ENCODE measurements at regions of chr17 and their contacts with region 1.

Region 1: DNA sequence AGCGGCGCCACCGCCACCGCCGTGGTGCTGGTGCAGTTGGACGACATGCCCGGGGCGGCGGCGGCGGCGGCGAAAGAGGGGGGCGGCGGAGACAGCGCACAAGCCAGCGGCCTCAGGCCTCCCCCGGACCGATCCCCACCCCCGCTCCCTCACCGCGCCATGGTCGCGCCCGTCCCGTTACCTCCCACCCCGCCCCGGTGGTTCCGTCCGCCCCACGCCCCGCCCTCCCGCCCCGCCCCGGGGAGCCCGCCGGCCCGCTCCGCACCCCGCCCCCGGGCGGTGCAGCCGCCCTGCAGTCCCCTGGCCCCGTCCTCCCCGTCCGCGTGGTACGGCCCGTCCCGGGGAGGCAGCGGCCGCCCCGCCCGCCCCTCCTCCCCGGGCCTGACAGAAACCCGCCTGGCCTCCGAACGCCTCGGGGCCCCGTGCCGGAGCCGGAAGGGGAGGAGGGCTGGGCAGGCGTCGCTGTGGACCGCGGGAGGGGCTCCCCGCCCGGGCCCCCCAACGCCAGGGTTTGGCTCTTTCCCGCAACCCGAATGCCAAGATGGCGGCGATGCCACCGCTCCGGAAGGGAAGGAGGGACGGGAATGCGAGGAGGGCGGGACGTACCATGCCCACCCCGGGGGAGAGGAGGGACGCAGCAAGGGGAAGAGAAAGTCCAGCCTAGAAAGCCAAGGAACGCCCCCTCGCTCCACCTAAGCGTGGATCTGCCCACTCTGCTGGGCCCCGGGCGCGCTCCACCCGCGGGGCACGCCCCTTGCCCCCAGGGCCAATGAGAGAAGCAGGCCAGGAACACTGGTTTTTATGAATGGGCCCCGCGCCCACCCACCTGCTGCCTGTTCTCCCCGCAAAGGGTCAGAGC is at the start of gene PIP4K2B:
- DNase-seq: peak; percentile 93
- ATAC-seq: peak; percentile 83
- H3K4me3 Mint-ChIP-seq: peak within 1 kb of the TSS; percentile 99
- H3K27ac Mint-ChIP-seq: peak within 1 kb of the TSS; percentile 94
- H3K4me1 Mint-ChIP-seq: peaks cover 33% of the 10 kb centered on the region
- H3K27me3 Mint-ChIP-seq: no peaks in the 10 kb centered on the region
- total RNA-seq, gene PIP4K2B: 36.3 to 41.6 TPM

Region 2: DNA sequence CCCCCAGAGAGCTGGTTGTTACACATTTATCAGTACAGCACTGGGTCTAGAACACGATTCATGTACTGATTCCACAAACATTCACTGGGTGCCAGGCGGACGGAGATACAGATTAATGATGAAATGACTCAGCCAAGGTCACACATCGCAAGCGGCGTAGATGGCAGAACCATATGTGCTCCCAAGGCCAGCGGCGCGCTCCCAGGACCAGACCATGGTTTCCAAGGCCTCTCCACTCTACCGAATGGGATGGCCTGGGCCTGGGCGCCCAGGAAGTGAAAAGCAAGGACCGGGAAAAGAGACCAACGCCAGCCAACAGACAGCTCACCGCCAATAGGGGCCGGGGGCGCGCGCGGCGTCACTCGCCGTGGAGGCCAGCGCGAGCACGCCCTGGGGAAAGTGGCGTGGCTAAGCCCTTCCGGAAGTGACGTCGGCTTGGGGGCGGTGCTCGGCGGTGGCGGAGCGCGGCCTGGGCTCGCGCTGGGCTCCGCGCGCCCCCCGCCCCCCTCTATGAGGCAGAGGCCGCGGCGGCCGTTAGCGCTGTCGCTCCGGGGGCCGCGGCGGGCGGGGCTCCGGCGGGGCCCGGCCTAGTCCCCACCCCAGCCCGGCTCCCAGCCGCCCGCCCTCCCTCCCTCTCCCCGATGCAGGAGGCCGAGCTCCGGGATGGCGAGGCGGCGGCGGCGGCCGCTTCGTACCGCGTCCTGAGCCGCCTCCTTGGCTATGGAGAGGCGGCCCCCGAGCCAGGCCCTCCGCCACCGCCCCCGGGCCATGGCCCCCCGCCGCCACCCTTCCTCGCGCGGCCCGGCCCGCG is 448.0 kb before region 1 on chr17 and contains the start of gene SOCS7:
- CTCF ChIA-PET with region 1: no interaction called
- POLR2A ChIA-PET with region 1: no interaction called
- intact Hi-C with region 1: loop called in 1 of 2 experiments (anchors 1 kb)
- DNase-seq: peak; percentile 95
- ATAC-seq: peak; percentile 89
- H3K4me3 Mint-ChIP-seq: peak within 1 kb of the TSS; percentile 85
- H3K27ac Mint-ChIP-seq: peak within 1 kb of the TSS; percentile 94
- H3K4me1 Mint-ChIP-seq: peaks cover 49% of the 10 kb centered on the region
- H3K27me3 Mint-ChIP-seq: no peaks in the 10 kb centered on the region
- total RNA-seq, gene SOCS7: 21.8 to 25.3 TPM

Region 3: DNA sequence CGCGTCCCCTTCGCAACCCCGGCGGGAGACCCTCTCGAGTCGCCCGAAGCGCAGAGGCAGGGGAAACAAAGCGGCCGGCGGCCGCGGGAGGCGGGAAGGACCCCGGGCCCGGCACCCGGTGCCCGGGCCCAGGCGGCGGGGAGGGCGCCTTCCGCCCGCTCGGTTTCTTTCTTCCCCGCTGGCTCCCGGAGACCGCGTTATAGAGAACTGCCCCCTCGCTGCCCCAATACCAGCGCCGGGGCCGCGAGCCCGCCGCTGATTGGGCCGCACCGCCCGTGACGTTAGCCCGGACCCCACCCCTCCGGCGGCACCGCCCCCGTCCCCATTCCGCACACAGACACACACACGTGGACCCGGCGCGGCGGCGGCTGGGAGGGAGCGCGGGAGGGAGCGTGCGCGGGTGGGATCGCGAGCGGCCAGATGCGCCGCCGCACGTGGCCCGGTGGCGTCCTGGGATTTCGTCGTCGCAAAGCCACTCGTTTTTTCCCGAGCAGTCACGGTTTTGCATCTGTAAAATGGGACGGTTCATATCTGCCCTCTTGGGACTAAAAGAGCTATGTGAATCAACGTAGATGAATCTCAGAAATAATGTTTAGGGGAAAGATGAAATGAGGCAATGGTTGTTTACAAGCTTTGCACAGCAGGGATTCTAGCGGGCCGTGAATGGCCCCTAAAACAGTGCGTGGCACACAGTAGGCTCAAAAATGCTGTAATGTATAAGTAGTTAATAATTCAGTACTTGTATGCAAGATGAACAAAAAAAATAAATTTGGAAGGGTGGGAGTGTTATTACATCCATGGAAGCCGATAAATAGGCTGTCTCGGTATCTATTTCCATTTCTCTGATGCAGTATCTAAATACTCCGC is 124.6 kb before region 1 on chr17 and contains the start of gene EPOP:
- CTCF ChIA-PET with region 1: no interaction called
- POLR2A ChIA-PET with region 1: no interaction called
- intact Hi-C with region 1: loop called in 1 of 2 experiments (anchors 1 kb)
- DNase-seq: peak; percentile 96
- ATAC-seq: peak; percentile 78
- H3K4me3 Mint-ChIP-seq: peak within 1 kb of the TSS; percentile 76
- H3K27ac Mint-ChIP-seq: peak within 1 kb of the TSS; percentile 85
- H3K4me1 Mint-ChIP-seq: peaks cover 47% of the 10 kb centered on the region
- H3K27me3 Mint-ChIP-seq: peaks cover 9% of the 10 kb centered on the region
- total RNA-seq, gene EPOP: 31.8 to 37.3 TPM

Region 4: GRCh38 chr17:38752119-38752929 is 47.3 kb before region 1 on chr17 and contains the start of gene PSMB3:
- CTCF ChIA-PET with region 1: no interaction called
- POLR2A ChIA-PET with region 1: interaction called, 3 read pairs
- intact Hi-C with region 1: loop called (anchors 1 to 2 kb)
- DNase-seq: peak; percentile 99
- ATAC-seq: peak; percentile 95
- H3K4me3 Mint-ChIP-seq: peak within 1 kb of the TSS; percentile 93
- H3K27ac Mint-ChIP-seq: peak within 1 kb of the TSS; percentile 99
- H3K4me1 Mint-ChIP-seq: peaks cover 43% of the 10 kb centered on the region
- H3K27me3 Mint-ChIP-seq: peaks cover 23% of the 10 kb centered on the region
- total RNA-seq, gene PSMB3: 337 to 396 TPM

Region 5: GRCh38 chr17:38786372-38786771 is 13.2 kb before region 1 on chr17:
- CTCF ChIA-PET with region 1: no interaction called
- POLR2A ChIA-PET with region 1: no interaction called
- intact Hi-C with region 1: no loop called
- DNase-seq: no peak
- ATAC-seq: no peak
- H3K4me3 Mint-ChIP-seq: no peak overlapping the region
- H3K27ac Mint-ChIP-seq: no peak overlapping the region
- H3K4me1 Mint-ChIP-seq: no peaks in the 10 kb centered on the region
- H3K27me3 Mint-ChIP-seq: no peaks in the 10 kb centered on the region

Region 6: DNA sequence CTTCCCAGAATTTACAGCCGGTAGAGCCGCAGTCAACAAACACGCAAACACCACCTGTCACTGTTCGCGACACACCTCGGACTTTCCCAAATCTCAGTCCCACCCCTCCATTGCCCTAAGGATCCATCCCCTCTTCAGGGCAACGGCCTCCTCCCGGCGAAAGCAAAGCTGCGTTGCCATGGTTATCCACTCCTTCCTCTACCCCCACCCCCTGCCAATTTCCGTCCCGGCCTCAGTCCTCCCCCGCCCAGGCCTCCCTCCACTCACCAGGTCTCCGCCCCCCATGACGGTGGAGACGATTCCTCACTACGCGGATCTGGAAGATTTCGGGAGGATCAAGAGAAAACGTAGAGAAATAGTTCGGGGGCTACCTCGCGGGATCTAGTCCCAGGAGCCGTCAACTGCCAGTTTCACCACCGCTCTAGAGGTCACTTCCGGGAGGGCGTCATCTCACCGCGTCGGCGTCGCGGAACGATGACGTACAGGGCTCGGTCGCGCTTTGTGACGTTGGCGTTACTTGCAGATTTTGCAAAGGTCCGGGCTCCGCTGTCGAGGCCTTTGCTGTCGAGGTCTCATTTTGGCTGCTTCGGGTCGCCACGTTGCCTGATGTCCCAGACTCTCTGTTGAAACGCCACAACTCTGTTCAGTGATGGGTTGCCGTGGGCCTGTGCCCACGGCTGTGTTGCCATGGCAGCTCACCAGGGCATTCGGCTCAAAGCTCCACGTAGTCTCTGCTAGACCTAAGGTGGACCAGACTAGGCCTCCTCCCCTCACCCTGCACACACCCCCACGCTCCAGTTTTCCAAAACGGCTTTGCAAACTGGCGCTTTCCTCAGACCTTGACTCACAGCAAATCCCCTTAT is 25.5 kb after region 1 on chr17 and contains the start of gene CWC25:
- CTCF ChIA-PET with region 1: interaction called, 4 read pairs
- POLR2A ChIA-PET with region 1: interaction called, 3 read pairs
- intact Hi-C with region 1: loop called in 1 of 2 experiments (anchors 1 kb)
- DNase-seq: peak; percentile 95
- ATAC-seq: peak; percentile 82
- H3K4me3 Mint-ChIP-seq: peak within 1 kb of the TSS; percentile 99
- H3K27ac Mint-ChIP-seq: peak within 1 kb of the TSS; percentile 99
- H3K4me1 Mint-ChIP-seq: peaks cover 27% of the 10 kb centered on the region
- H3K27me3 Mint-ChIP-seq: no peaks in the 10 kb centered on the region
- total RNA-seq, gene CWC25: 23.3 to 24.0 TPM

Region 7: GRCh38 chr17:38898812-38899348 is 99.3 kb after region 1 on chr17:
- CTCF ChIA-PET with region 1: no interaction called
- POLR2A ChIA-PET with region 1: no interaction called
- intact Hi-C with region 1: loop called in 1 of 2 experiments (anchors 1 kb)
- DNase-seq: peak; percentile 95
- ATAC-seq: peak; percentile 91
- H3K4me3 Mint-ChIP-seq: peak overlapping the region; percentile 70
- H3K27ac Mint-ChIP-seq: peak overlapping the region; percentile 98
- H3K4me1 Mint-ChIP-seq: peaks cover 65% of the 10 kb centered on the region
- H3K27me3 Mint-ChIP-seq: no peaks in the 10 kb centered on the region

Region 8: DNA sequence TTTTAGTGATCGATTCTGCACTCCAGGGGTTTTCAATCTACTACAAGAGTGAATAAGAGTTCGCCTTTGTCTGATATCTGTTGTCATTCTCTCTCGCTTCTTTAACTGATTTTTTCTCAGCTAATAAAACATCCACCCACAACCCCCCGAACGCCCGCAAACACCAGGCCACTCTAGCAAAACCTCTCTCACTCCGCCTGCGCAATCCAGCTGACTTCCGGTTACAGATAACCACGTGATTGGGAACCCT is 400.1 kb after region 1 on chr17:
- CTCF ChIA-PET with region 1: no interaction called
- POLR2A ChIA-PET with region 1: no interaction called
- intact Hi-C with region 1: loop called in 1 of 2 experiments (anchors 1 kb)
- DNase-seq: peak; percentile 95
- ATAC-seq: peak; percentile 69
- H3K4me3 Mint-ChIP-seq: peak overlapping the region; percentile 98
- H3K27ac Mint-ChIP-seq: peak overlapping the region; percentile 100
- H3K4me1 Mint-ChIP-seq: peaks cover 51% of the 10 kb centered on the region
- H3K27me3 Mint-ChIP-seq: no peaks in the 10 kb centered on the region